ENCODE measurements at regions of chr14 and their contacts with region 1.

Region 1: DNA sequence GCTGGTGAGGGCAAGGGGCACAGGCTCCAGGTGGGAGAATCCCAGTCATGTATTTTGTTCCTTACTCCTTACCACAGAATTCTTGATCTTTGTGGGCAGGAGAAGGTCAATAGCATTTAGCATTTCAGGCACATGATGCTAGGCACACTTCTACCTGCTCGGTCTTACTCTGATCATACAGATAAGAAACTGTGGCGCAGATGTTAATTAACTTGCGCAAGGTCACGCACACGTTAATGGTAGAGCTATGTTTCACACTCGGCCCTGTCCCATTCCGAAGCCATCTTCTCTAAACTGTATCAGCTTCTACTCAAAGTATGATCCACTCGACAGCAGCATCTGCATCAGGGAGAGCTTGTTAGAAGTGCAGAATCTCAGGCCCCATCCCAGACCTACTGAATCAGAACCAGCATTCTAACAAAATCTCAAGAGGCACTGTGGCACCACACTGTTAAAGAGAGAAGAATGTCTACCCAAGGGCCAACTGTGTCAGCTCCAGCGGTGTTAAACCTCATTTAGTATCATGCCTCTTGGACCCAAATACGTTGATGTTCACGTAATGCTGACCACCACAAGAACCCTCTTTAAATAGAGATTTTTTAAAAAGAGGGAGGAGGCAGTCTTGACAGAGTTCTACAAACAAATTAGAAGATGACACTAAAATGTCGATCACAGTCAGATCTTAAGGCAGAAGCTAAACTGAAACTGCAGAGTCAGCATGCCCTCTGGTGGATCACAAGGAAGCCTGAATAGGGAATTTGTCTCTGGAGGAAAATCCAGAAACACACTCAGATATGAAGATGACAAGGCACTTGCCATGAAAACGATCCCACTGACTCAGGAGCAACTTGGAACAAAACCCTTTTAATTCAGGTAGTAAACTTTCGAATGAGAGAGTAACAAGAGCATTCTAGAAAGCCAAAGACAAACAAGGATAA is 7.3 kb downstream of the STXBP6 start:
- DNase-seq: peak in 1 of 3 donors; percentile 68
- ATAC-seq: peak; percentile 59
- H3K4me3 ChIP-seq: no peak overlapping the region
- H3K4me1 ChIP-seq: peaks cover 14% of the 10 kb centered on the region
- CTCF ChIP-seq: peak; percentile 35

Region 2: DNA sequence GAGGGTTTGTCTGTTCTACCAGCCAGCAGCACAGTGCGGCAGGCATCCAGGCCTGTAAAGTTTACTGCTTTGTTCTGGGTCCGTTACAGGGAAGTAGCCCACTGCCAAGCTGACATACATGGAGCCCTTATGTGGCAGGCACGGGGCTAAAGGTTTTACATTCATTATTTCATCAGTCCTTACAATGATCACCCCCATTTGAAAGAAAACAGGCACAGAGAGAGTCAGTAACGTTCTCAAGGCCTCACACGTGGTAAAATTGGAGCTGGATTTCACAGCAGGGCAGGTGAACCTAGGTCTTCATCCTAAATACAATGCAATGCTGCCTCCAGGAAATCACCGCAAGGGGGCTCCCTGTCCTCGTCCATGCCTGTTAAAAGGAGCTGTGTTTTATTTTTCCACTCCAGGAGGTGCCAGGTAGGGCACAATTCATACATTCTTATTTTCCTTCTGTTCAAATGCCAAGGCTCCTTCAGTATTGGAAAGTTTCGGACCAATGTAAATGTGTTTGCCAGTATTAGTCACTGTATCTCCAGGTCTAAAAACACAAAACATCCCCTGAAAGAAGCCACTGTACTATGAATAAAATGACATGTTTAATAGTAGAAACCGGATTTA is 236.5 kb before region 1 on chr14:
- intact Hi-C with region 1: loop called in 1 of 2 experiments (anchors 5 kb)
- DNase-seq: peak; percentile 67 to 96 (median 84)
- ATAC-seq: peak; percentile 94
- H3K4me3 ChIP-seq: no peak overlapping the region
- H3K4me1 ChIP-seq: peaks cover 4% of the 10 kb centered on the region
- CTCF ChIP-seq: peak; percentile 68

Region 3: DNA sequence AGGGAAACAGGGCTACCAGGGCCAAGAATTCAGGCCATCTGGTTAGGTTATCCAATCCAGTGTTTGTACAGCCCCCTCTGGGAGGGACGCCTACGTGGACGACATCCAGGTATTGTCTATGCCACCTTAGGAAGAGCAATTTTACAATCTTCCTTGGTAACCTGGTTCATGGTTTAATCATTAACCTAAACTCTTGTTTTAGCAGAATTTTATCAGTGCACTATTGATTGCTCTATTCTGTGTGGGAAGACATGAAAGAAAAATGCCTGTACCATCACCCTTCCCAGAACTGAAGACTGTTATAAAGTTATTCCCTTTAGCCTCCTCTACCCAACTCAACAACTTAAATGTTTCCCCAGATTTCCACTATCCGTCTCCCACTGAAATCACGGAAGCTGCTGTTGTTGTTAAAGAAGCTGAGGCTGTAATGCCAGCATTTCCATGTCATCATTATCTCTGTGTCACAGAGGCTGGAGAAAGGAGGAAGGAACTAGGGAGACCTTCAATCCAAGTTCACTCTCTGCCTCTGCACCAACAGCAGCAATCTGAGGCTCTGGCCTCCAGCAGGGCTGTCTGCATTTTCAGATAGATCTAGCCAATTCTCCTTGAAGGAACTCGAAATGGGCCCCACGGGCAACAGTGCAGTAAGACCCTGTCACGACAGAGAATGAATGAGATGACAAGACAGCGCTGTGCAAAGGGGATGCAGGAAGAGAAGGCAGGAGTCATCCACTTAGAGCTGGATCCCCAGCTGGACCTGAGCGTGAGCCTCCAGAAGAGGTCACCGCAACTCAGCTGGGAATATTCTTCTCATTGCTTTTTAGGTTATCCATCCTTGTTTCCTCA is 225.2 kb before region 1 on chr14:
- intact Hi-C with region 1: loop called in 1 of 2 experiments (anchors 5 kb)
- DNase-seq: peak; percentile 72 to 85 (median 74)
- ATAC-seq: peak; percentile 80
- H3K4me3 ChIP-seq: no peak overlapping the region
- H3K4me1 ChIP-seq: peaks cover 37% of the 10 kb centered on the region
- CTCF ChIP-seq: no peak

Measured in mucosa of descending colon (tissue), 3 donors.